Vagina (tissue), 2 donors: ENCODE measurements at regions of chr1 and their contacts with region 1.

Region 1: DNA sequence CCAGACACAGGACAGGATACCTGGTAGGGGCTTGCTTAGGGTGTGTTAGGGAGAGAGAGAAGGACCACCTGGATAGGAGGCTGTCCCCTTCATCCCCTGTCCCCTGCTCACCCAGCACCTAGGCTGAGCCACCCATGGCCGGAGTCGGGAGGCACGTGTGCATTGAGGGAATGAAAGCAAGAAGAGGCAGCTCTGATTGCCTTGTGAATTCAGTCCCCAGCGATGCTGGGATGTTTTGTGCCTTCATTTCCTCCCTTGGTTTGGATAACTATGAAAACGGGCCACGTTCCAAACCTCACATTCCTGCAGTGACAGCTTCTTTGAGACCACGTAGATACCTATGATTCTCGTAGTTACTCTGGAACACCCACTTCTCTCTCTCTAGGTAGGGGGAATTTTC is 67.1 kb downstream of the MAN1C1 start:
- DNase-seq: no peak
- H3K4me3 ChIP-seq: no peak overlapping the region
- H3K27ac ChIP-seq: no peak overlapping the region
- H3K4me1 ChIP-seq: peaks cover 36% of the 10 kb centered on the region
- H3K27me3 ChIP-seq: no peaks in the 10 kb centered on the region
- CTCF ChIP-seq: no peak
- POLR2A ChIP-seq: no peak

Region 2: GRCh38 chr1:25695090-25695770 is 11.5 kb after region 1 on chr1:
- intact Hi-C with region 1: no loop called
- DNase-seq: peak in 1 of 2 donors; percentile 95
- H3K4me3 ChIP-seq: no peak overlapping the region
- H3K27ac ChIP-seq: peak overlapping the region; percentile 85
- H3K4me1 ChIP-seq: peaks cover 78% of the 10 kb centered on the region
- H3K27me3 ChIP-seq: no peaks in the 10 kb centered on the region
- CTCF ChIP-seq: no peak
- POLR2A ChIP-seq: no peak

Region 3: GRCh38 chr1:25723250-25723880 is 39.7 kb after region 1 on chr1:
- intact Hi-C with region 1: loop called (anchors 2 kb)
- DNase-seq: no peak
- H3K4me3 ChIP-seq: no peak overlapping the region
- H3K27ac ChIP-seq: no peak overlapping the region
- H3K4me1 ChIP-seq: peaks cover 32% of the 10 kb centered on the region
- H3K27me3 ChIP-seq: no peaks in the 10 kb centered on the region
- CTCF ChIP-seq: no peak
- POLR2A ChIP-seq: no peak